ENCODE measurements at regions of chr6 and their contacts with region 1.

Region 1: GRCh38 chr6:11496152-11497060 is 41.1 kb upstream of the TMEM170B start:
- DNase-seq: peak; percentile 74
- H3K4me3 Mint-ChIP-seq: no peak overlapping the region
- H3K27ac Mint-ChIP-seq: no peak overlapping the region
- H3K4me1 Mint-ChIP-seq: peaks cover 5% of the 10 kb centered on the region
- H3K27me3 Mint-ChIP-seq: no peaks in the 10 kb centered on the region

Region 2: DNA sequence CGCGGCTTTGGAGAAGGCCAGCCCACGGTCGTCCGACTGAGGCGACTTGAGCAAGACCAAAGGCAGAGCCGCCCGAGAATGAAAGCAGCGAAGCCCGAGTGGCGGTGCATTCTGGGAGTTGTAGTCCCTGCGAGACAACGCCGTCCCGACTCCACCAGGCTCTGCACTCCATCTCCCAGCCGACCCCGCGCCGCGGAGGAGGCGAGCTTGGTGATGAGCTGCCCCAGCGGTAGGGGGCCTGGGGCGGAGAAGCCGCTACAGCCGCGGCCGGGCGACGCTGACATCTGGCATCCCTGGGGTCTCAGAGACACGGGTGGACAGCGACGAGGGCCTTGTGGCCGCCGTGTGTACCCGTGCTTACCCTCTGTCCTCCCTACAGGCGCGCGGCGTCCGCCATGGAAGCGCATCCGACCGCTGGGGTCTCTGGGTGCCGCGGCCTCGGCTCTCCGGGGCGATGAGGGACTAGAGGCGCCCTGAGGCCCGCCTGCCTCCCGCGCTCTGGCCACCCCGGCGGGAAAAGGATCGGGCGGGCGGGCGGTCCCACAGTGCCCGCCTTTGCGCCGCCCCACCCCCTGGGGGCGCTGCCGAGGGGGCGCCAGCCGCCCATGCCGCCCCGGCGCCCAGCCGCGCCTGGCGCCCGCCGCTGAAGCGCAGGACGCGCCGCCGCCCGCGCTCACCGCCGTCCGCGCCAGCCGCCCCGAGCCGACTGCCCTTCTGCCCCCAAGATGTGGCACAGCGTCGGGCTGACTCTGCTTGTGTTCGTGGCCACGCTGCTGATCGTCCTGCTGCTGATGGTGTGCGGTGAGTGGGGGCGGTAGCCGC is 402.6 kb before region 1 on chr6 and contains the start of gene SMIM13:
- CTCF ChIA-PET with region 1: interaction called, 6 read pairs
- POLR2A ChIA-PET with region 1: no interaction called
- intact Hi-C with region 1: loop called (anchors 1 kb)
- DNase-seq: peak; percentile 97
- H3K4me3 Mint-ChIP-seq: peak within 1 kb of the TSS; percentile 97
- H3K27ac Mint-ChIP-seq: peak within 1 kb of the TSS; percentile 98
- H3K4me1 Mint-ChIP-seq: peaks cover 27% of the 10 kb centered on the region
- H3K27me3 Mint-ChIP-seq: no peaks in the 10 kb centered on the region
- total RNA-seq, gene SMIM13: 7.2 to 9.5 TPM

Region 3: GRCh38 chr6:11144393-11144851 is 352.0 kb before region 1 on chr6:
- CTCF ChIA-PET with region 1: interaction called, 131 read pairs
- POLR2A ChIA-PET with region 1: interaction called, 3 read pairs
- intact Hi-C with region 1: loop called (anchors 1 kb)
- DNase-seq: peak; percentile 86
- H3K4me3 Mint-ChIP-seq: no peak overlapping the region
- H3K27ac Mint-ChIP-seq: no peak overlapping the region
- H3K4me1 Mint-ChIP-seq: peaks cover 6% of the 10 kb centered on the region
- H3K27me3 Mint-ChIP-seq: no peaks in the 10 kb centered on the region

Region 4: DNA sequence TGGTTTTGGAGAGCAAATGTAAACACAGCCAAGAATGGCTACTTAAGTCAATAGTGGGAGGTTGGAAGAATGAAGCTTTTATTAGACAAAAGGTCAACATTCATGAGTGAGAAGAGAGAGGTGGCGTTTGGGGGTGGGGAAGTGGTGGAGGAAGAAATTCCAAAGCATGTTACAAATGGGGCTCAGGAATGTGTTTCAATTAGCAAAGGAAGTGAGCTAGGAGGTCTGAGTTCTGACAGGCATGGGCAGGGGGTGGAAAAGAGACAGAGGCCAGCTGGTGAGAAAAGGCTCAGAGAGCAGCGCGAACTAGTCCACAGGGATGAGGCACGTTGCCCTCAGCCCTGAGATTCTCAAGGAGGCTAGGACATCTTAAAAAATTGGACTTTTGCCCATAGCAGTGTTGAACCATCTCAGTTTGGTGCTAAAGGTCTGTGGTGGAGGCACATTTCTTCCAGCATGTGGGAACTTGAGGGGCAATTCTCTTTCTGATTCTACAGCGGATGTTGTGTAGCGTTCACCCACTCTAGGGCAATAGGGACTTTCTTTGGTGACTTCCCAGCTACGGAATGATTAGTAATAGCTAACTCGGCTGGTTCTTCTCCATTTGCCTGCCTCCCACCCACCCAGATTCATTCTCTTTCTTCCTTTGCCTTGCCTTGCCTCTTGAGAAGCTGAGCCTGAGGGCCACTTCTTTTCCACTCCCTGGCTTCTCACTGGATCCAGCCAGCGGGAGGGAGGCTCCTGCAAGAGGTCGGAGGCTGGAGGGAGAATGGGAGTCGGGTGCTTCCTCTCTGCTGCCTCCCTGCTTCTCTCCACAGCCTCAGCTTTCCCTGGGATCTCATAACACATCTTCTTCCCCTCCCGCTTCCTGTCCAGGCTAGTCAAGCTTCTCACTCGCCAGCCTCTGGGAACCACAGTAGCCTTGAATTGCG is 218.9 kb before region 1 on chr6:
- CTCF ChIA-PET with region 1: interaction called, 11 read pairs
- POLR2A ChIA-PET with region 1: no interaction called
- intact Hi-C with region 1: loop called (anchors 1 kb)
- DNase-seq: peak; percentile 72
- H3K4me3 Mint-ChIP-seq: peak overlapping the region; percentile 49
- H3K27ac Mint-ChIP-seq: peak overlapping the region; percentile 93
- H3K4me1 Mint-ChIP-seq: peaks cover 59% of the 10 kb centered on the region
- H3K27me3 Mint-ChIP-seq: no peaks in the 10 kb centered on the region

Region 5: DNA sequence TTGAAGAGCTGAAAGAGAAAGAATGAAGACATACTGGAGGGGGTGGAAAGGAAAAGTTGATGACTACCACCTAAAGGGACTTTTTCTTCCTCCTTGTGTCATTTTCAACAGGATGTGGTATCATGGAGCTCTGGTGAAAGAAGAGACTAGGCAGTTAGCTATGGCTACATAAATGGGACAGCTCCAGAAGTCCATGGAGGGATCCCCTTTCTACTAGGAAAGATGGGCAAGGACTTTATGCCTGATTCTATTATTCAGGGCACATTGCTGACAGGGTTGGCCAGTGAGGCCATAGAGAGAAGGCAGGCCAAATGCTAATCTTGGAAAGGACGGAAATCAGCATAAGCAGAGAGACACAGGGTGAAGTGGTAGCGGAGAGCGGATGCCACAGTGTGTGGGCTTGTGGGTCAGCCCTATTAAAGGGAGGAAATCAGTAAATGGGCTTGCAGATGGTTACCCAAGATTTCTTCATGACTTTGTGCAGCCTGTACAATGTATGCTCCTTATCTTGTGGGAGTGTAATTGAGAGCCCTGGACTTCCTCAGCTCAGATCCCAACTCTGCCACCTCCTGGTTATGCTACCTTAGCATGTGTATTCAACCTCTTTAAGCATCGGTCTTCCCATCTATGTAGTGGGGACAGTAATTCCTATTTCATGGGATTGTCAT is 36.3 kb before region 1 on chr6:
- CTCF ChIA-PET with region 1: interaction called, 18 read pairs
- POLR2A ChIA-PET with region 1: no interaction called
- intact Hi-C with region 1: loop called (anchors 1 kb)
- DNase-seq: peak; percentile 23
- H3K4me3 Mint-ChIP-seq: peak overlapping the region; percentile 57
- H3K27ac Mint-ChIP-seq: peak overlapping the region; percentile 90
- H3K4me1 Mint-ChIP-seq: peaks cover 31% of the 10 kb centered on the region
- H3K27me3 Mint-ChIP-seq: no peaks in the 10 kb centered on the region

Region 6: DNA sequence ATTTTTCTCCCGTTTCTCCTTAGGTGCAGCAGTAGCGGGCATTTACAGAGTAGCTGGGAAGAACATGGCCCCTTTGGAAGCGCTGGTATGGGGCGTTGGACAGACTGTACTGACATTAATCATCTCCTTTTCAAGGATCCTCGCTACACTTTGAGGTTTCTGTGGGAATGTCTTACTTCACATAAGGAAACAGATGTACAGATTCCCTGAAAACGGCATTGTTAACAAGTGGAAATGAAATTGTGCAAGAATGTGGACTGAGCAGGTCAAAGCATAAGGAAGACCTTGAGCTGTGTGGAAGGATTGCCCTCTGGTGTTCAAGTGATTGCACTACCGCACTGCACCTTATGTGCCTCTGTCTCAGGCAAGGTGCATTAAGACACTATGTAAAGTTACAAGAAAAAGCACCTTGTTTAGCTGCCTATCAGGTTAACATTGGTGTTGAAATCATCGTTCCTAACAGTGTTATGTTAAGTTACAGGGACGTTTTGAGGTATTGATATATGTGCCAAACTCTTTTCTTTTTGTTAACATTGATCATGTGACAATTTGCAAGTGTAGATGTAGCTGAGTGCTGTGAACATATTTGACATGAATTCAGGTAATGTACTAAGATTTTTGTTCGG is 79.1 kb after region 1 on chr6:
- CTCF ChIA-PET with region 1: interaction called, 19 read pairs
- POLR2A ChIA-PET with region 1: no interaction called
- intact Hi-C with region 1: loop called (anchors 1 kb)
- DNase-seq: peak; percentile 63
- H3K4me3 Mint-ChIP-seq: no peak overlapping the region
- H3K27ac Mint-ChIP-seq: no peak overlapping the region
- H3K4me1 Mint-ChIP-seq: no peaks in the 10 kb centered on the region
- H3K27me3 Mint-ChIP-seq: no peaks in the 10 kb centered on the region

Measured in activated CD4-positive, alpha-beta memory T cell treated with anti-CD3 and anti-CD28 coated beads for 36 hours (primary cell).